Activated CD8-positive, alpha-beta T cell treated with anti-CD3 and anti-CD28 coated beads, Interleukin-2, amount 10 ng/mL, durations not matched to agents 7 days and 5 days (primary cell): ENCODE measurements at regions of chr12 and their contacts with region 1.

Region 1: DNA sequence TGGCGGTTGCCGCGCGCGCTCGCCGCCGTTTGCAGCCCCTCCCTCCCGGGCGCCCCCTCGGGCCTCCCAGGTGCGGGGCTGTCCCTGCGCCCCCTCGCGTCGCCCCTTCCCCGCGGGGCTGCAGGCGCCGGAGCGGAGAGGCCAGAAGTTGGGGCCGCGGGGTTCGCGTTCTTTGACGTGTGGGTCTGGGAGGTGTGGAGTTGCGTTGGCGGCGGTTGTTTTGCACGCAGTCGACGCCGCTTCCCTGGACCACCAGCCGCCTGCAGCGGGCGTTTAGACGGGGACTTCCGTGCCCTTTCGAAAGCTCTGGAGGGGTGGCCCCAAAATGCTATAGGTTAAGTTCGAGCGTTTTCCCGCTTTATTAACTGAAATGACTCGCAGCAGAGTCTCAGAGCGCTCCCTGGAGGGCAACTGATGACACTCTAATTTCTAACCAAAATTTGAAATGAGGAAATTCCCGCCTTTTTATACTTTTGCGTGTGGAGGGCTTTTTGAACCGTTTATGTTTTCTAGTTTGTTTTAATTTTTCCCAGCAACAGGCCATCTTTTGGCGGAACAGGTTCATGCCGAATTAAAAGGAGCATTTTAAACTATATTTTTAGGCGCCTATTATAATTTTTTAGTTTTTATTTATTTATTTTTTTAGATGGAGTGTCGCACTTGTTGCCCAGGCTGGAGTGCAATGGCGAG is 939 bp downstream of the TMPO start:
- DNase-seq: peak; percentile 94
- ATAC-seq: peak; percentile 68
- H3K4me3 Mint-ChIP-seq: peak overlapping the region; percentile 99
- H3K27ac Mint-ChIP-seq: peak overlapping the region; percentile 99
- H3K4me1 Mint-ChIP-seq: peaks cover 35% of the 10 kb centered on the region
- H3K27me3 Mint-ChIP-seq: no peaks in the 10 kb centered on the region

Region 2: GRCh38 chr12:98319716-98320425 is 196.5 kb before region 1 on chr12:
- CTCF ChIA-PET with region 1: no interaction called
- POLR2A ChIA-PET with region 1: no interaction called
- DNase-seq: no peak
- ATAC-seq: no peak
- H3K4me3 Mint-ChIP-seq: no peak overlapping the region
- H3K27ac Mint-ChIP-seq: no peak overlapping the region
- H3K4me1 Mint-ChIP-seq: no peaks in the 10 kb centered on the region
- H3K27me3 Mint-ChIP-seq: peaks cover 11% of the 10 kb centered on the region

Region 3: DNA sequence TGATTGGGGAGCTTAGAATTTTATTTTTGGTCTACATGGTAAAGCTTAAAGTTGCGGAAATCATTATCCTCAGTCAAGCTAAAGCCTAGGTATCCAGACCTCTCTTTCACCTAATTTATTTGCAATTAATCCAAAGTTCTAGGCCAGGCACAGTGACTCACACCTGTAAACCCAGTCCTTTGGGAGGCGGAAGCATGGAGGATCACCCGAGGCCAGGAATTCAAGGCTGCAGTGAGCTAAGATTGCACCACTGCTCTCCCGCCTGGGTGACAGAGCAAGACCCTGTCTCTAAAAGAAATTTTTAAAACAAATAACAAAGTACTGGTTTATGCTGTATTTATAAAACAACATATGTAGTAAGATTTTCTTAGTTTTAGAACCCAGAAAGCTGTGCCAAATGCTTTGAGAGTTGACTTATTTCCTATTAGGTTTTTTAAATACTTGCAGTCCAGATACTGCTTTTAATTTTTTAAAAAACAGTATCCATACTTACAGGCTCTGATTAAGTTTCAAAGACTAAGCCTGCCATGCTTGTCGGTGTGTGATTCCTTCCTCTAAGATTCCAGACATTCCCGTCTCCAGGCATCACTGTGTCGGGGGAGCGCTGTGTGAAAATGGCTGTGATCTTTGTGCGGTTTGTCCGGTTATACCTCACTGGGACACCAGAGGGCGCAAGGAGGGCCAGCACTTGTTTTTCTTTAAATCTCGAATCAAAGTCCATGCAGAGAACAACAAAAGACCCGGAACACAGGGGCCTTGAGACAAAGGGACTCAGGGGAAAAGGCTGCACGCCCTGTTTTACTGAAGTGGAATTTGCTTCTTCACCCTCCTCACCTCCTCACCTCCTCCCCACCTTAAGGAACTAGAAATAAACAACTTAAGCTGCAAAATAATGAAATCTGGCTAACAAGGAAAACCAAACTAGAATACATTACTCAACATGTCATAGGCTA is 25.6 kb before region 1 on chr12:
- CTCF ChIA-PET with region 1: interaction called, 76 read pairs
- POLR2A ChIA-PET with region 1: interaction called, 57 read pairs
- DNase-seq: peak; percentile 88
- ATAC-seq: peak; percentile 95
- H3K4me3 Mint-ChIP-seq: peak overlapping the region; percentile 60
- H3K27ac Mint-ChIP-seq: peak overlapping the region; percentile 94
- H3K4me1 Mint-ChIP-seq: peaks cover 7% of the 10 kb centered on the region
- H3K27me3 Mint-ChIP-seq: peaks cover 8% of the 10 kb centered on the region

Region 4: GRCh38 chr12:98503592-98504367 is 12.5 kb before region 1 on chr12:
- CTCF ChIA-PET with region 1: interaction called, 19 read pairs
- POLR2A ChIA-PET with region 1: interaction called, 94 read pairs
- DNase-seq: peak; percentile 96
- ATAC-seq: peak; percentile 88
- H3K4me3 Mint-ChIP-seq: peak overlapping the region; percentile 95
- H3K27ac Mint-ChIP-seq: peak overlapping the region; percentile 99
- H3K4me1 Mint-ChIP-seq: peaks cover 23% of the 10 kb centered on the region
- H3K27me3 Mint-ChIP-seq: peaks cover 8% of the 10 kb centered on the region

Region 5: GRCh38 chr12:98532681-98533304 is 16.5 kb after region 1 on chr12:
- CTCF ChIA-PET with region 1: interaction called, 13 read pairs
- POLR2A ChIA-PET with region 1: interaction called, 6 read pairs
- DNase-seq: no peak
- ATAC-seq: peak; percentile 62
- H3K4me3 Mint-ChIP-seq: no peak overlapping the region
- H3K27ac Mint-ChIP-seq: no peak overlapping the region
- H3K4me1 Mint-ChIP-seq: peaks cover 21% of the 10 kb centered on the region
- H3K27me3 Mint-ChIP-seq: no peaks in the 10 kb centered on the region

Region 6: DNA sequence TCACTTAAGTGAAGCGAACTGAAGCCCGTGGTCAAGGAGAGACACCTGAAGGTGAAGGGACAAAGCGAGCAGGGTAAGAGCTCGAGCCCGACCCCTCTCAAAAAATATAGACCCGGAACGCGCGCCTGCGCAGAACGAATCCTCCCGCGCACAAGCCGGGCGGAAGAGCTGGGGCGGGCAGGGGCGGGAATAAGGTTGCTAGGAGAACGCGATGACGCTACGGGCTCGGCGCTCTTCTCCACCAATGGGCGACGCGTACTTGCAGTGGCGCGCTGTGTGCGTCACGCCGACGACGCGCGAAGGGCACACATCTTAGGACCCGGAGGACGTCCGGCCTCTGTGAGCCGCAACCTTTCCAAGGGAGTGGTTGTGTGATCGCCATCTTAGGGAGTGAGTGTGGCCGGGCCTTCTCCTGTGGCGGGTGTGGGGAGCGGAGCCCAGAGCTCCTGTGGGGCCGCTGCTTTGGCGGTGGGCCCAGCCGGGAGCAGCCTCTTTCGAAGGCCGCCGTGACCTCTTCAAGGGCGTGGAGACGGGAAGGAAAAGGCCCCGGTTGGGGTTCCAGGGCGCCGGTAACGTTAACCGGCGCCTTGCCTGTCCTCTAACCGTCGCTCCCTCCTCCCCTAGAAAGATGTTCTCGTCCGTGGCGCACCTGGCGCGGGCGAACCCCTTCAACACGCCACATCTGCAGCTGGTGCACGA is 77.2 kb after region 1 on chr12 and contains the start of gene SLC25A3:
- CTCF ChIA-PET with region 1: interaction called, 4 read pairs
- POLR2A ChIA-PET with region 1: interaction called, 49 read pairs
- DNase-seq: peak; percentile 96
- ATAC-seq: peak; percentile 96
- H3K4me3 Mint-ChIP-seq: peak within 1 kb of the TSS; percentile 84
- H3K27ac Mint-ChIP-seq: peak within 1 kb of the TSS; percentile 98
- H3K4me1 Mint-ChIP-seq: peaks cover 30% of the 10 kb centered on the region
- H3K27me3 Mint-ChIP-seq: no peaks in the 10 kb centered on the region
- total RNA-seq, gene SLC25A3: 407 to 440 TPM

Region 7: GRCh38 chr12:98644711-98645402 is 128.5 kb after region 1 on chr12 and contains the starts of genes APAF1 and IKBIP:
- CTCF ChIA-PET with region 1: interaction called, 3 read pairs
- POLR2A ChIA-PET with region 1: interaction called, 19 read pairs
- DNase-seq: peak; percentile 97
- ATAC-seq: peak; percentile 89
- H3K4me3 Mint-ChIP-seq: peak within 1 kb of the TSS; percentile 96
- H3K27ac Mint-ChIP-seq: peak within 1 kb of the TSS; percentile 98
- H3K4me1 Mint-ChIP-seq: peaks cover 41% of the 10 kb centered on the region
- H3K27me3 Mint-ChIP-seq: no peaks in the 10 kb centered on the region
- total RNA-seq, gene APAF1: 33.4 to 35.9 TPM
- total RNA-seq, gene IKBIP: 35.4 to 35.8 TPM